Activated T-helper 2 cell treated with anti-CD3 and anti-CD28 coated beads, Interferon-gamma antibody, Interleukin-2, Interleukin-4, amounts not matched to agents 10 μg/mL and 5 μg/mL and 100 μg/mL, durations not matched to agents 14 hours and 24 hours and 36 hours (primary cell): ENCODE measurements at regions of chr9 and their contacts with region 1.

Region 1: DNA sequence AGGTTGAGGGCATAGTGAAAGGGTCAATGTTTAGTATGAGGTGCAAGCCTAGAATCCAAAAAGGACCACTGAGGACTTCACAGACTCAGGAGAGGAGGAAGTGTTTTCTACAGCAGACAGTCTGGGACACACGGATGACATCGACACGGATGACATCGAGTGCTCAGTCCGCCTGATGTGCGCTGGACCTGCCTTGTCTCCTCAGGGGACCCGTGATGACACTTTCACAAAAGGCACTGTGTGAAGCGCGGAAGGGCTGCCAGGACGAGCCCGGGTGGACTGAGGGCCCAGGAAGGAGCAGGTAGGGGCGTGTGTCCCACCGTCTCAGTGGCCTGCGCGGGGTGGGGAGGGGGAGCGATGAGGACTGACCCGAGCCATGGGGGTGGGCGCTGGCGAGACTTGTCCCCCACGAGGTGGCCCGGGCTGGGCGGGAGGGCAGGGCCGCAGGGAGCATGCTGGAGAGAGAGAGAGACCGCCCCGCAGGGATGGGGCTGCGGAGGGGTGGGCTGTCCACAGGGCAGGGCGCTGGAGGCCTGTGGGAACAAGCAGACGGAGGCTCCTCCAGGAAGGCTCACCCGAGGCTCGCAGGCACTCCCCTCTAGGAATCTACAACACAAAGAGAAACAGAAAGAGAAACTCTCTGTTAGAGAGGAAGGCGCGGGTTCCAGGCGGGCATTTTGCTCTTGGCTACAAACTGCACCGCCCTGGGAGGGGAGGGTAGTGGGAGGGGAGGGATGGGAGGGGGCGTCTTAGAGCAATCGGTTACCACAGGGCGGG is 54.9 kb downstream of the USP20 start:
- DNase-seq: peak; percentile 80
- H3K4me3 Mint-ChIP-seq: peak overlapping the region; percentile 82
- H3K27ac Mint-ChIP-seq: peak overlapping the region; percentile 99
- H3K4me1 Mint-ChIP-seq: peaks cover 76% of the 10 kb centered on the region
- H3K27me3 Mint-ChIP-seq: no peaks in the 10 kb centered on the region

Region 2: GRCh38 chr9:129910628-129911567 is 20.8 kb after region 1 on chr9:
- intact Hi-C with region 1: loop called (anchors 2 kb)
- DNase-seq: no peak
- H3K4me3 Mint-ChIP-seq: no peak overlapping the region
- H3K27ac Mint-ChIP-seq: peak overlapping the region; percentile 51
- H3K4me1 Mint-ChIP-seq: peaks cover 31% of the 10 kb centered on the region
- H3K27me3 Mint-ChIP-seq: no peaks in the 10 kb centered on the region

Region 3: GRCh38 chr9:129962889-129963703 is 73.0 kb after region 1 on chr9:
- intact Hi-C with region 1: loop called (anchors 1 kb)
- DNase-seq: peak; percentile 76
- H3K4me3 Mint-ChIP-seq: peak overlapping the region; percentile 80
- H3K27ac Mint-ChIP-seq: peak overlapping the region; percentile 89
- H3K4me1 Mint-ChIP-seq: peaks cover 67% of the 10 kb centered on the region
- H3K27me3 Mint-ChIP-seq: no peaks in the 10 kb centered on the region